Activated T-helper 2 cell treated with anti-CD3 and anti-CD28 coated beads, Interferon-gamma antibody, Interleukin-2, Interleukin-4, amounts not matched to agents 10 μg/mL and 5 μg/mL and 100 μg/mL, durations not matched to agents 14 hours and 24 hours and 36 hours (primary cell): ENCODE measurements at regions of chr15 and their contacts with region 1.

Region 1: DNA sequence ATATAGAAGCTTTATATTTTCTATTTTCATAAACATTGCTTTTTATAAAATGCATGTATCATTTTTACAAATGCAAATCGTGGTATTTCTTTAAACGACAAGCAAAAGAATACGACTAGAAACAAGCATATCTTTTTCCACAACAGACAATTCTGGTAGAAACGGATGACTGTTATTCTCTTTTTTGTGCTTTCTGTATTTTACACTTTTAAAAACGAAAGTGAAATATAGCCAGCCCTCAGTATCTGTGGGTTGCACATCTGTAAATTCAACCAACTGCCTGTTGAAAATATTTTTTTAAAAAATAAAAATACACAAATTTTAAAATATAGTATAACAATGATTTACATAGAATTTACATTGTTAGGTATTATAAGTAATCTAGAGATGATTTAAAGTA is 61.3 kb downstream of the PRTG start:
- DNase-seq: no peak
- H3K4me3 Mint-ChIP-seq: no peak overlapping the region
- H3K27ac Mint-ChIP-seq: no peak overlapping the region
- H3K4me1 Mint-ChIP-seq: peaks cover 9% of the 10 kb centered on the region
- H3K27me3 Mint-ChIP-seq: peaks cover 2% of the 10 kb centered on the region

Region 2: GRCh38 chr15:55661428-55661827 is 20.2 kb before region 1 on chr15:
- intact Hi-C with region 1: loop called (anchors 1 kb)
- DNase-seq: no peak
- H3K4me3 Mint-ChIP-seq: no peak overlapping the region
- H3K27ac Mint-ChIP-seq: peak overlapping the region; percentile 78
- H3K4me1 Mint-ChIP-seq: peaks cover 30% of the 10 kb centered on the region
- H3K27me3 Mint-ChIP-seq: no peaks in the 10 kb centered on the region